HEK293 (cell line): ENCODE measurements at regions of chr17 and their contacts with region 1.

Region 1: DNA sequence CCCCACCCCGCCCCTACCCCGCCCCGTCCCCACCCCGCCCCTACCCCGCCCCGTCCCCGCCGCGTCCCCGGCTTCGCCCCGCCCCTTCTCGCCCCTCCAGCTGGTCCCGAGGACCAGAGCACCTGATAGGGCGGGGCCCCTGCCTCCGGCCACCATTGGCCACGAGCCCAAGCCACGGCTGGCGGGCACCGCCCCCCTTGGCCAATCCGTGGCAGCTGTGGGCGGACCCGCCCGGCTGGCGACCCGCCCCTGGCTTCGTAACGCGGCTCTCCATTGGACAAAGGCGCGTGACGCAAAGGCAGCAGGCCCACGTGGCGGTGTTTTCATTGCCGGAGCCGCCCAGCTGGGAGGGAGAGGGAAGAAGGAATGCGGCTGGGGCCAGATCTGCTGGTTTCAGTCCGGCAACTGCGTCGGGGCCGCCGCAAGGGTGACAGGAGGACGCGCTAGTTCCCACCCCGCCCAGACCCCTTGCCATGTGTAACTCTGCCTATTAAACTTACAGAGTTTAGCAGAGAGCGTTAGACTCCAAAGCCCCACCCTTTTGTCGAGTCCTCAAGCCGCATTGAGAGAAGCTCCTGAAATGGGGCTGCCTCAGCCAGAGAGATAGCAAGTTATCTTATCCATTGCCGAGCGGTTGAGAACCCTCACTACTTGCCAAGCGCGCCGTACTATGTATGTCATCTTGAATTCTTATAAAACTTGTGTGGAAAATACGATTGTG is 403 bp upstream of the WIPI1 start:
- H3K4me3 ChIP-seq: peak overlapping the region; percentile 42
- H3K27ac ChIP-seq: no peak overlapping the region
- H3K4me1 ChIP-seq: peaks cover 14% of the 10 kb centered on the region
- CTCF ChIP-seq: no peak

Region 2: DNA sequence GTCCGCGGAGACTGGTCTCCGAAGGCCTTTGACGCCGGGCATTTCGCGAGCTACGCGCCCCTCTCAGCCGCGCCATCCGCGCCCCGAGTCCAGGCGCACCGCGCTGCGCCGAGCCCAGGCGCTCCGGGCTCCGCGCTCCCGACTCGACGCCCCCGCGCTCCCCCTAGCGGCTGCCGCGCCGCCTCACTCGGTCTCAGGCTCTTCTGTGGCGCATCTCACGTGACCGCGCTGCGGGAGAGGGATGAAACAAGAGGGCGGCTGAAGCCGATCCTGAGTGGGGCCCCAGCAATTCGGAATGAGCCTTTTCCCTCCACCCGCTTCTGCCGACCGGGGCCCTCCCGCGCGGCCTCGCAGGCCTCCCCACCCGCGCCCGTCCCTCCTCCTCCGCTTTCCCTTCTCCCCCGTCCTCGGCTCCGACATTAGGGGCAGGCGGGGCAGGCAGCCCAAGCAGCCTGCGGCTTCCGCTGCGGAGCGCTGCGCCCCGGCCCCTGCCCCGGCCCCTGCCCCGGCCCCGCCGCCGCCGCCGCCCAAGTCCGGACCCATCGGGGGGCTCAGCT is 252.4 kb before region 1 on chr17:
- CTCF ChIA-PET with region 1: interaction called, 5 read pairs
- POLR2A ChIA-PET with region 1: interaction called, 10 read pairs
- H3K4me3 ChIP-seq: peak overlapping the region; percentile 90
- H3K27ac ChIP-seq: peak overlapping the region; percentile 79; the same call in 1 of the 2 replicates
- H3K4me1 ChIP-seq: peaks cover 5% of the 10 kb centered on the region; the same call in 1 of the 2 replicates
- CTCF ChIP-seq: peak; percentile 79

Region 3: GRCh38 chr17:68260051-68260762 is 197.5 kb before region 1 on chr17:
- CTCF ChIA-PET with region 1: interaction called, 35 read pairs
- POLR2A ChIA-PET with region 1: no interaction called
- H3K4me3 ChIP-seq: no peak overlapping the region
- H3K27ac ChIP-seq: no peak overlapping the region
- H3K4me1 ChIP-seq: no peaks in the 10 kb centered on the region
- CTCF ChIP-seq: no peak

Region 4: GRCh38 chr17:68346448-68346847 is 111.3 kb before region 1 on chr17:
- CTCF ChIA-PET with region 1: no interaction called
- POLR2A ChIA-PET with region 1: no interaction called
- H3K4me3 ChIP-seq: no peak overlapping the region
- H3K27ac ChIP-seq: no peak overlapping the region
- H3K4me1 ChIP-seq: no peaks in the 10 kb centered on the region
- CTCF ChIP-seq: no peak

Region 5: DNA sequence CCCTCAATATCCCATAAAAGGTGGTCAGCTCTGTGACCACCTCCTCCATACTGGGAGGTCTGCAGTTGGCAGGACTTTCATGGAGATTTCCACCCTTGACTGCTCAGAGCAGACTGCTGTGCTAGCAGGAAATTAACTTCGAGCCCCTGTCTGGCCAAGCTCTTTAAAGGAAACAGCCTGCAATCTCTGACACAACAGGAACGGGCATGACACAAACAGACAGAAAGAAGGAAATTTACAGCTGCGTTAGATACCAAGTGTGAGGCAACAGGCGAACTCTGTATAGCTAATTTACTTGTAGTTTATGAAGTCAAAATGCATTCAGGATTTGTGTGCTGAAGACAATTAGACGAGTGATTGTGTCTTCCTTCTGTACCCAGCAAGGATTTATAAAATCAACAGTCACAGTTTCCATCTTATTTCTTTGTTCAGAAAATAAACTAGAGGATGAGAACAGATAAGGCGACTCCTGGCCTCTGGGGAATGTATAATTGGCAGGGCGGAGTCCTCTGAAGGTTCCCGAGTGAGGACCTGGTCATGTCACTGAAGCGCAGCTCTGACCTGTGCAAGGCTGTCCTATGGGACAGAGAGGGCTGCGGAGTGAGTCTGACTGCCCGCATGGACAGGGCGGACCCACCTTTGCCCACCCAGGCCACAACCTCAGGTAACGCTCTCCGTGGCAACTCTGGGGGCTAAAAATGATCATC is 16.5 kb before region 1 on chr17:
- CTCF ChIA-PET with region 1: interaction called, 17 read pairs
- POLR2A ChIA-PET with region 1: no interaction called
- H3K4me3 ChIP-seq: no peak overlapping the region
- H3K27ac ChIP-seq: no peak overlapping the region
- H3K4me1 ChIP-seq: peaks cover 9% of the 10 kb centered on the region
- CTCF ChIP-seq: no peak

Region 6: DNA sequence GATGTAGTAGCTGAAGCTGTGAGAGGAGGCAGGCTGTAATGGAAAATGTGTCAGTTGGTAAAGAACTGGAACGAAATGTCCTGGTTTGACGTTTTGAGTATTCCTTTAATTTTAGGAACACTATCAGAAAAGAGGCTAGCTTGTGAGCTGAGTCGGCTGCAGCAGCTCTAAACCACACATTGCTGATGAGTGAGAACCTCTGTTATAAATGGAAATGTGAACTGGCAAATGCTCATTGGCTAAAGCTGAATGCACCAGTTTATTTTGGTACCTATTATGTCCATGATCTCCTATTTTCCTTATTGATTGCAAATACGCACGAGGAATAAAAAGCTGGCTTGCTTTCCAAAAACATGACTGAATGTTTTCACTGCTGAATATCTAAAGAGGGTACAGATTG is 10.6 kb after region 1 on chr17:
- CTCF ChIA-PET with region 1: interaction called, 32 read pairs
- POLR2A ChIA-PET with region 1: interaction called, 5 read pairs
- H3K4me3 ChIP-seq: no peak overlapping the region
- H3K27ac ChIP-seq: no peak overlapping the region
- H3K4me1 ChIP-seq: no peaks in the 10 kb centered on the region
- CTCF ChIP-seq: no peak

Region 7: DNA sequence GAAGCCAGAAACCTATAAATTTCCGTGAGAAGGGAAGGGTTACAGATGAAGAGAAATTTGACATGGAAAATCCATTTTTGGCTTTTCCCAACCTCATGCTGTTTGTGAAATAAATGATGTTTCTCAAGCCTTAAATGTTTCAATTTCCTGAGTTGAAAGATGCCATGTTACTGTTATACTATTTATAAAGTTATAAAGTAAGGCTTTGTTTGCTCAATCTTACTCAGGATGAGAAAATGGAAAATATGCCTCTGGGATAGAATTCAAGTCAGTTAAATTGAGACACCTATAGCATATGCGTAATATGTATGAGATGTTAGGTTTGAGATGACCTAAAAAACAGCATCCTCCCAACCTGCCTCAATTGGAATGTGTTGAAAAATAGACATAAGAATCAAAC is 163.4 kb after region 1 on chr17:
- CTCF ChIA-PET with region 1: no interaction called
- POLR2A ChIA-PET with region 1: no interaction called
- H3K4me3 ChIP-seq: no peak overlapping the region
- H3K27ac ChIP-seq: no peak overlapping the region
- H3K4me1 ChIP-seq: no peaks in the 10 kb centered on the region
- CTCF ChIP-seq: no peak